ENCODE measurements at regions of chr2 and their contacts with region 1.

Region 1: DNA sequence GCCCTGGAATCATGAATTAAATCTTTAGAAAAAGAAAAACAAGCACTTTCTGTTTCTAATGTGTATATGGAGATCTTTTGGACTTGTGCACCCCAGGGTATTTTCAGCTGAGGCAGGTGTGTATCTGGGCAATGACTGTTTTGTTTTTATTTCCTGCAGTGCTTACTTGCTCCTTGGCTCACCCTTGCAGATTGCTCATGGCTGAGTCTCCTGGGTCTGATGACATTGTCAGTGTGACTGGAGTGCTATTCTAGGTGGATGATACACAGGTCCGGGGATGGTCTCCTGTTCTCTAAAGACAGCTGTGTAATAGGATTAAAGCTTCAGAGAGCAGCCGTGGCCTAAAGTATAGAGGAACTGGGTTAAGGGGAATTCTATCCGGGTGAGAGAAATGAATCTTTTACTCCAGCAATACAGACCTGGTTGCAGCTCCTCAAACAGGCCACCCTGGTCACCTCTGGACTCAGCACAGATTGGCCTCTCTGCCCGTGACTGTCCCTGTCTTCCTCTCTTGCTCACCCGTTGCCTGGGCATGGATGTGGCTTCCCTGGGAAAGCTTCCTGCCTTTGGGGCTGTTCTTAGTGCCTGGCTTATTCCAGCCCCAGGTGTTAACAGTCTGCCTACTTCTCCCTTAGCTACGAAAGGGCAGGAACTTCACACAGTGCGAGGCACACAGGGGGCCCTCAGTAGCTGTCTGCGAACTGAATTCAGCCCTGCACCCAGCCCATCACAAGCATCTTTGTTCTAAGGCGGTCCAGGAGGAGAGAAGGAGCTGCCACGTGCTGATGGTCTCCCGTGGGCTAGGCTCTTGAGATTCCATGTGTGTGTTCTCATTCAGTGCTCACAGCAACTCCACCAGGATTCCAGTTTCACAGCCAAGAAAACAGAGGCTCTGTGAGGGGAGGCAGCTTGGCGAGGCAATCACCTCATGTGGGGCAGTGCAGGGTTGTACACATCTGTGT is 84.3 kb downstream of the ACOXL start:
- DNase-seq: peak; percentile 81
- H3K4me3 ChIP-seq: no peak overlapping the region
- H3K27ac ChIP-seq: no peak overlapping the region
- H3K4me1 ChIP-seq: no peaks in the 10 kb centered on the region
- H3K27me3 ChIP-seq: no peaks in the 10 kb centered on the region
- CTCF ChIP-seq: no peak

Region 2: GRCh38 chr2:110167326-110168000 is 649.2 kb before region 1 on chr2:
- CTCF ChIA-PET with region 1: no interaction called
- dilution Hi-C with region 1: no loop called
- in situ Hi-C with region 1: no loop called
- intact Hi-C with region 1: no loop called
- DNase-seq: no peak
- H3K4me3 ChIP-seq: no peak overlapping the region
- H3K27ac ChIP-seq: no peak overlapping the region
- H3K4me1 ChIP-seq: no peaks in the 10 kb centered on the region
- H3K27me3 ChIP-seq: no peaks in the 10 kb centered on the region
- CTCF ChIP-seq: no peak

Region 3: GRCh38 chr2:110853507-110853906 is 36.8 kb after region 1 on chr2:
- CTCF ChIA-PET with region 1: no interaction called
- dilution Hi-C with region 1: no loop called
- in situ Hi-C with region 1: no loop called
- intact Hi-C with region 1: loop called (anchors 1 kb)
- DNase-seq: no peak
- H3K4me3 ChIP-seq: no peak overlapping the region
- H3K27ac ChIP-seq: no peak overlapping the region
- H3K4me1 ChIP-seq: no peaks in the 10 kb centered on the region
- H3K27me3 ChIP-seq: no peaks in the 10 kb centered on the region
- CTCF ChIP-seq: peak; percentile 48 to 69

Region 4: GRCh38 chr2:110865188-110865587 is 48.5 kb after region 1 on chr2:
- CTCF ChIA-PET with region 1: no interaction called
- dilution Hi-C with region 1: no loop called
- in situ Hi-C with region 1: no loop called
- intact Hi-C with region 1: no loop called
- DNase-seq: no peak
- H3K4me3 ChIP-seq: no peak overlapping the region
- H3K27ac ChIP-seq: no peak overlapping the region
- H3K4me1 ChIP-seq: peaks cover 6% of the 10 kb centered on the region
- H3K27me3 ChIP-seq: no peaks in the 10 kb centered on the region
- CTCF ChIP-seq: no peak

Region 5: GRCh38 chr2:111017034-111017622 is 200.4 kb after region 1 on chr2:
- CTCF ChIA-PET with region 1: no interaction called
- dilution Hi-C with region 1: no loop called
- in situ Hi-C with region 1: no loop called
- intact Hi-C with region 1: loop called (anchors 10 kb)
- DNase-seq: no peak
- H3K4me3 ChIP-seq: no peak overlapping the region
- H3K27ac ChIP-seq: no peak overlapping the region
- H3K4me1 ChIP-seq: no peaks in the 10 kb centered on the region
- H3K27me3 ChIP-seq: no peaks in the 10 kb centered on the region
- CTCF ChIP-seq: no peak

Region 6: DNA sequence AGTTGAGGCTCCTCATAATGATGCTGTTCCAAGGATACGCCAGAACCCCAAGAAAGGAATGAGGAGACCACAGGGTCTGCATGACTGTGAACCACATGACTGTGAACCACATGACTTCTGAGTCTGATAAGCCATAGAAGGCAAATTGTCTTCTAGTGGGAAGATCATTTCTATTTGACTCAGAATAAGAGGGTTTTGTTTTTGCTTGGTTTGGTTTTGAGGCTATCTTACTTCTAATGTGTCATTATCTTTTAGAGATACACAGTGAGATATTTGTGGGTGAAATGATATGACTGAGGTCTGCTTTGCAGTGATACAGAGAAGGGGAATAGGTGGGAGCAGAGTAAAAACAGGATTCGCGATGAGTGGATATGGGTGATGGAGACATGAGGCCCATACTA is 275.1 kb after region 1 on chr2:
- CTCF ChIA-PET with region 1: no interaction called
- dilution Hi-C with region 1: no loop called
- in situ Hi-C with region 1: no loop called
- intact Hi-C with region 1: no loop called
- DNase-seq: no peak
- H3K4me3 ChIP-seq: no peak overlapping the region
- H3K27ac ChIP-seq: no peak overlapping the region
- H3K4me1 ChIP-seq: no peaks in the 10 kb centered on the region
- H3K27me3 ChIP-seq: peaks cover 10% of the 10 kb centered on the region
- CTCF ChIP-seq: no peak

Measured in mammary epithelial cell (primary cell).